H1 (cell line): ENCODE measurements at regions of chr10 and their contacts with region 1.

Region 1: GRCh38 chr10:122342293-122343134 is 32.0 kb upstream of the PLEKHA1 start:
- DNase-seq: peak; percentile 21 to 55
- H3K4me3 ChIP-seq: no peak overlapping the region
- H3K27ac ChIP-seq: no peak overlapping the region
- H3K4me1 ChIP-seq: peaks cover 2 to 11% (median 8%) of the 10 kb centered on the region in 4 experiments; a peak in 6 of 7 replicates
- H3K27me3 ChIP-seq: no peaks in the 10 kb centered on the region
- CTCF ChIP-seq: peak; percentile 36 to 62 (median 57)
- EP300 ChIP-seq: no peak
- POLR2A ChIP-seq: no peak
- RAD21 ChIP-seq: peak; percentile 63 to 71

Region 2: GRCh38 chr10:122267849-122268737 is 74.4 kb before region 1 on chr10:
- CTCF ChIA-PET with region 1: no interaction called
- POLR2A ChIA-PET with region 1: no interaction called
- DNase-seq: peak in 1 of 2 experiments; percentile 88
- H3K4me3 ChIP-seq: no peak overlapping the region
- H3K27ac ChIP-seq: no peak overlapping the region
- H3K4me1 ChIP-seq: peaks cover 0 to 2% (median 0%) of the 10 kb centered on the region in 4 experiments; a peak in 2 of 7 replicates
- H3K27me3 ChIP-seq: no peaks in the 10 kb centered on the region
- CTCF ChIP-seq: peak; percentile 88 to 95 (median 94)
- EP300 ChIP-seq: no peak
- POLR2A ChIP-seq: no peak
- RAD21 ChIP-seq: peak; percentile 63 to 76

Region 3: GRCh38 chr10:122352817-122353525 is 10.5 kb after region 1 on chr10:
- CTCF ChIA-PET with region 1: interaction called, 16 read pairs
- POLR2A ChIA-PET with region 1: no interaction called
- DNase-seq: no peak
- H3K4me3 ChIP-seq: no peak overlapping the region
- H3K27ac ChIP-seq: no peak overlapping the region
- H3K4me1 ChIP-seq: peaks cover 0 to 2% (median 0%) of the 10 kb centered on the region in 4 experiments; a peak in 1 of 7 replicates
- H3K27me3 ChIP-seq: no peaks in the 10 kb centered on the region
- CTCF ChIP-seq: no peak
- EP300 ChIP-seq: no peak
- POLR2A ChIP-seq: no peak
- RAD21 ChIP-seq: no peak

Region 4: GRCh38 chr10:122417667-122418066 is 75.2 kb after region 1 on chr10:
- CTCF ChIA-PET with region 1: no interaction called
- POLR2A ChIA-PET with region 1: no interaction called
- DNase-seq: no peak
- H3K4me3 ChIP-seq: no peak overlapping the region
- H3K27ac ChIP-seq: no peak overlapping the region
- H3K4me1 ChIP-seq: 0 out of 7 replicates have a peak, but pooled peaks cover 0 to 3% (median 0%) of the 10 kb centered on the region in 4 experiments
- H3K27me3 ChIP-seq: no peaks in the 10 kb centered on the region
- CTCF ChIP-seq: no peak
- EP300 ChIP-seq: no peak
- POLR2A ChIP-seq: no peak
- RAD21 ChIP-seq: no peak